GM12878 (cell line): ENCODE measurements at regions of chr12 and their contacts with region 1.

Region 1: DNA sequence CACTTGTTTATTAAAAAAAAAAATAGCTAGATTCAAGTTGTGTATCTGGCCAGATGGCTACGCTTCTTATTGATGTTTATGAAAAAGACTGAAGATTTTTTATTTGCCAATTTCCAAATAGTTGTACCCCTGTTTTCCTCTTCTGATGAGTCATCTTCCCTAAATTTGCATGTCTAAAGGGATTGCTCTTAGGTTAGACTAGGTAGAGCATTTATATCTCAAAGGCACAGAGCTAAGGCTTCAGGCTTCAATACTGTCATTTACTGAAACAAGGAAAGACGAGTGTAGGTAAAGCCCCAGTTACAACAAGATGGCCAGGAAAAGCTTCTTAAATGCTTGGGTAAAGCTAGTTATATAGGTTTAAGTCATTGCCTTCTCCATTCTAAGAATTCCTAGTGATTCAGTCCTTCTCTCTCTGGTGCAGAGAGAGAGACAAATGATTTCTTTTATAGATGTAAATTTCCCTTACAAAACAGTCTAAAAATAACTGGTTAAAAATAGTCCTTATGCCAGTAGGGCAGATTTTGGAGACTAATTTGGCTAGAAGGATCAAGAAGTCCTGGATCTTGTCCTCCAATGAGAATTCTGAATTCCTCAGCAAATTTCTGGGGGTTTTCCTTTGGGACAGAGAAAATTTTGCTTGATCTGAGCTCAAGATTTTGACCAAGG is 26.1 kb downstream of the LEMD3 start:
- DNase-seq: no peak
- ATAC-seq: no peak
- H3K4me3 ChIP-seq: no peak overlapping the region
- H3K27ac ChIP-seq: 0 out of 2 replicates have a peak overlapping the region, but pooled peaks have one; percentile 35
- H3K4me1 ChIP-seq: peaks cover 4% of the 10 kb centered on the region
- H3K27me3 ChIP-seq: no peaks in the 10 kb centered on the region
- CTCF ChIP-seq: no peak
- EP300 ChIP-seq: no peak
- POLR2A ChIP-seq: no peak
- RAD21 ChIP-seq: no peak

Region 2: DNA sequence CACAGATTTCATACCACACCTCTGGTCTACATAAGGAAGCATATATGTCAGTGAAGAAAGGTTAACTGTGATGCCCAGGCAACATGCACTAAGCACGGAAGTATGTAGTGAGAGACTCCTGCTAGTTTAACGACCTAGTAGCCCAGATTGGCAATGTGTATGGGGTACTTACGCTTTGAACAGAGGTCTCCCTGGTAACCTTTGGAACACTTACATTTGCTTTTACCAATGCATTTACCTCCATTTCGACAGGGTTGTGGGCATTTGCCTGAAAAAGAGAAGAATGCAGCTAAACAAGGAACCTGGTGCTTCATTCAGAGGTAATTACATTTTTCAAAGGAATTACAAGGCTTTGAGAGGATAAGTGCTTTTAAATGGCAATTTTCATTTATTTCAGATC is 139.7 kb before region 1 on chr12:
- CTCF ChIA-PET with region 1: no interaction called
- POLR2A ChIA-PET with region 1: no interaction called
- RAD21 ChIA-PET with region 1: no interaction called
- SMC1A ChIA-PET with region 1: no interaction called
- in situ Hi-C with region 1: no loop called
- intact Hi-C with region 1: no loop called
- DNase-seq: no peak
- ATAC-seq: no peak
- H3K4me3 ChIP-seq: no peak overlapping the region
- H3K27ac ChIP-seq: no peak overlapping the region
- H3K4me1 ChIP-seq: no peaks in the 10 kb centered on the region
- H3K27me3 ChIP-seq: 0 out of 4 replicates have a peak, but pooled peaks cover 0 to 2% of the 10 kb centered on the region in 2 experiments
- CTCF ChIP-seq: no peak
- EP300 ChIP-seq: no peak
- POLR2A ChIP-seq: no peak
- RAD21 ChIP-seq: no peak

Region 3: DNA sequence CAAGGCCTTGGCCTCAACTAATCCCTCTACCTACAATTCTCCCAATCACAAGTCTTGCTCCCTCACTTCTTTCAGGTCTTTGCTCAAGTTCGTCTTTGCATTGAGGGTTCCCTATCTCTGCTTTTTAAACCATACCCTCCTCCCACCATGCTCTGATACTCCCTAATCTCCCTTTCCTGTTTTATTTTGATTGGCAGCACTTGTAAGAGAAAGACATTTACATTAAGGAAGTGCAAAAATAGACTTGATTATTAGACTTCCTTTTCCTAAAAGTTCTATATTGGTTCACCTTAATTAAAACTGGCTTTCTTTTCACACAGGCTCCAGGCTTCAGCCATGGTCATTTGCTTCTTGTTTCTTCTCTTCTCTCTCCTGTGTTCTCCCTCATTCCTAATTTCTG is 56.1 kb before region 1 on chr12:
- CTCF ChIA-PET with region 1: no interaction called
- POLR2A ChIA-PET with region 1: no interaction called
- RAD21 ChIA-PET with region 1: no interaction called
- SMC1A ChIA-PET with region 1: no interaction called
- in situ Hi-C with region 1: no loop called
- intact Hi-C with region 1: no loop called
- DNase-seq: no peak
- ATAC-seq: no peak
- H3K4me3 ChIP-seq: no peak overlapping the region
- H3K27ac ChIP-seq: no peak overlapping the region
- H3K4me1 ChIP-seq: no peaks in the 10 kb centered on the region
- H3K27me3 ChIP-seq: peaks cover 0 to 10% of the 10 kb centered on the region in 2 experiments; a peak in 3 of 4 replicates
- CTCF ChIP-seq: no peak
- EP300 ChIP-seq: no peak
- POLR2A ChIP-seq: no peak
- RAD21 ChIP-seq: no peak

Region 4: GRCh38 chr12:65156366-65156841 is 39.1 kb before region 1 on chr12:
- CTCF ChIA-PET with region 1: no interaction called
- POLR2A ChIA-PET with region 1: interaction called, 4 read pairs
- RAD21 ChIA-PET with region 1: interaction called, 7 read pairs
- SMC1A ChIA-PET with region 1: interaction called, 14 read pairs
- in situ Hi-C with region 1: no loop called
- intact Hi-C with region 1: no loop called
- DNase-seq: peak; percentile 77
- ATAC-seq: peak; percentile 90
- H3K4me3 ChIP-seq: peak overlapping the region; percentile 44
- H3K27ac ChIP-seq: peak overlapping the region; percentile 69
- H3K4me1 ChIP-seq: peaks cover 20% of the 10 kb centered on the region
- H3K27me3 ChIP-seq: no peaks in the 10 kb centered on the region
- CTCF ChIP-seq: no peak
- EP300 ChIP-seq: 0 out of 4 replicates have a peak, but pooled peaks of 1 of the 2 experiments have one; percentile 62
- POLR2A ChIP-seq: no peak
- RAD21 ChIP-seq: no peak

Region 5: GRCh38 chr12:65182012-65182739 is 13.3 kb before region 1 on chr12:
- CTCF ChIA-PET with region 1: interaction called, 11 read pairs
- POLR2A ChIA-PET with region 1: interaction called, 5 read pairs
- RAD21 ChIA-PET with region 1: interaction called, 9 read pairs
- SMC1A ChIA-PET with region 1: interaction called, 56 read pairs
- in situ Hi-C with region 1: no loop called
- intact Hi-C with region 1: no loop called
- DNase-seq: no peak
- ATAC-seq: peak; percentile 37
- H3K4me3 ChIP-seq: no peak overlapping the region
- H3K27ac ChIP-seq: no peak overlapping the region
- H3K4me1 ChIP-seq: peaks cover 17% of the 10 kb centered on the region
- H3K27me3 ChIP-seq: no peaks in the 10 kb centered on the region
- CTCF ChIP-seq: no peak
- EP300 ChIP-seq: no peak
- POLR2A ChIP-seq: no peak
- RAD21 ChIP-seq: no peak

Region 6: GRCh38 chr12:65217086-65217485 is 21.6 kb after region 1 on chr12:
- CTCF ChIA-PET with region 1: no interaction called
- POLR2A ChIA-PET with region 1: no interaction called
- RAD21 ChIA-PET with region 1: interaction called, 3 read pairs
- SMC1A ChIA-PET with region 1: interaction called, 10 read pairs
- in situ Hi-C with region 1: no loop called
- intact Hi-C with region 1: no loop called
- DNase-seq: no peak
- ATAC-seq: no peak
- H3K4me3 ChIP-seq: no peak overlapping the region
- H3K27ac ChIP-seq: no peak overlapping the region
- H3K4me1 ChIP-seq: no peaks in the 10 kb centered on the region
- H3K27me3 ChIP-seq: no peaks in the 10 kb centered on the region
- CTCF ChIP-seq: no peak
- EP300 ChIP-seq: no peak
- POLR2A ChIP-seq: no peak
- RAD21 ChIP-seq: no peak

Region 7: DNA sequence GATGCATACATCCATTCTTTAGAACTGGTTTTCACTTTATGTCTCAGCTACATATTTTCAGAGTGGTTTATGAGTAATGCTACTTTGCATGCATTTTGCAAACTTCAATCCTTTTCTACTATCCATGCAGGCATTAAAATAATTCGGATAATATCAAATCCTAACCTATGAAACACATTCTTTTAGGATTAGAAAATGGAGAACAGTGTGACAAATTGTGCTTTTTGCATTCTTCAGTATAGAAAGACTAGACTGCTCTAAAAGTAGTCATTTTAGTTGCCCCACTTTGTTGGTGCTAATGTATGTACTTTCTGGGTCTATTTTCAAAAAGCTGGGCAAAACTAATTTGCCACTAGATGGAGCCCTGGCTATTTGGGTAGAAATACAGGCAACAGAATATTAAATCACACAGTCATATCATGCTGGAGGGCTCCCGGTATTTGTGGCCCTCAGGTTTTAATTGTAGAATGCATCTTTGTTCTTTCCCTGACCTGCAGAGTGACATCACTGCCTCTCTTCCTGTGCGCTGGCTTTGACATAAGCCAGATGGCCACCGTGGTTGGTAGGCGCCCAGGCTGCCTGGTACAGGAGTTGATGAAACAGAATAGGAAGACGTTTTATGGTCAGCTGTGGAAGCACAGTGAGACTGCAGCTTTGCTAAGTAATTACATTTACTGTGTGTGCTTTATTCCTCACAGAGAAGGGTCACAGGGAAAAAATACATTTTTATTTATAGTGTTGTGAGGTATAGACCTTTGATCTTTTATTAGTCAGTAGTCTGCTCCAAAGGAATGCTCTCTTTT is 111.0 kb after region 1 on chr12:
- CTCF ChIA-PET with region 1: no interaction called
- POLR2A ChIA-PET with region 1: no interaction called
- RAD21 ChIA-PET with region 1: no interaction called
- SMC1A ChIA-PET with region 1: no interaction called
- in situ Hi-C with region 1: no loop called
- intact Hi-C with region 1: no loop called
- DNase-seq: no peak
- ATAC-seq: peak; percentile 76
- H3K4me3 ChIP-seq: no peak overlapping the region
- H3K27ac ChIP-seq: no peak overlapping the region
- H3K4me1 ChIP-seq: no peaks in the 10 kb centered on the region
- H3K27me3 ChIP-seq: no peaks in the 10 kb centered on the region
- CTCF ChIP-seq: peak; percentile 46 to 60 (median 56)
- EP300 ChIP-seq: no peak
- POLR2A ChIP-seq: no peak
- RAD21 ChIP-seq: peak; percentile 70